Panc1 (cell line): ENCODE measurements at regions of chr15 and their contacts with region 1.

Region 1: GRCh38 chr15:55434989-55435825 is 26.9 kb downstream of the PIERCE2 start:
- DNase-seq: peak; percentile 42
- ATAC-seq: peak; percentile 97
- H3K4me3 ChIP-seq: no peak overlapping the region
- H3K27ac ChIP-seq: no peak overlapping the region
- H3K4me1 ChIP-seq: no peaks in the 10 kb centered on the region
- H3K27me3 ChIP-seq: no peaks in the 10 kb centered on the region
- CTCF ChIP-seq: peak; percentile 77

Region 2: DNA sequence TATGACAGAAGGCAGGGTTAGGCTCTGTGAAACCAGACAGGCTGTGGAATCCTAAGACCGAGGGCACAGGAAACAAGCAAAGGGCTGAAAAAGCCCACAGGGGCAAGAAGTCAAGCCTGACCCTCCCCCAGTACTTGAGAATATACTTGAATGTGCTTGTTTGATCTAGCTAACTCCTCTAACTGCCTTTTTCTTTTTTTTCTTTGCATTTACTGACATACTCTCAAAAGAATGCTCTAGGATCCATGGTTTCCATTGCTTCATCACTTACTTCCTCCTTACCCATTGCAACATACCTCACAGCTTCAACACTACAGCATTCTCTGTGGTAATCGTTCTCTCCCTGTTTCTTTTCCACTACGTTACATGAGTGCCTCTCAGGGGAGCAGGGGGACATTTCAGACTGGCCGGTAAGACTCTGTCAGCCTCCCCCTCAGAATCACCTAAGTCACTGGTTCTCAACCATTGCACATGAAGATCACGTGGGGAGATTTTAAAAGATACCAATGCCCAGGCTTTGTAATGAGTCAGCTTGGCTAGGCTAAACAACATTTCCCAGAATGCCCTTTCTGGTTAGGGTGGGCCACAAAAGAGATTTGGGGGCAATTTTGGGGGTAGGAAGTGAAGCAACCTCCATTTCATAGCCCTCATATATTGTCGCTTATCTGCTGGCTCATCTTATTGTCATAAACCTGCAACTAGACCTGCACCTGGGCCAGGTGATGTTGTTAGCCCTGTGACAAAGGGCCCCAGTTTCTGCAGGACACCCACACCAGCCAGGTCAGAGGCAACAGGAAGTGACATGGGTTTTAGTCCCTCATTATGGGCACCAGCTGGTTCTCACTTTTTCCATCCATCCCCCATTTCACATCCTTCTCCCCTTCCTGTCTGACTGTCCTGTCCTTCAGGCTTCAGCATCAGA is 213.9 kb before region 1 on chr15:
- CTCF ChIA-PET with region 1: interaction called, 4 read pairs
- POLR2A ChIA-PET with region 1: no interaction called
- in situ Hi-C with region 1: no loop called
- intact Hi-C with region 1: loop called (anchors 2 kb)
- DNase-seq: no peak
- ATAC-seq: no peak
- H3K4me3 ChIP-seq: no peak overlapping the region
- H3K27ac ChIP-seq: no peak overlapping the region
- H3K4me1 ChIP-seq: no peaks in the 10 kb centered on the region
- H3K27me3 ChIP-seq: no peaks in the 10 kb centered on the region
- CTCF ChIP-seq: no peak

Region 3: GRCh38 chr15:55318588-55319494 is 116.4 kb before region 1 on chr15 and contains the starts of genes PIGB and PIGBOS1:
- CTCF ChIA-PET with region 1: interaction called, 3 read pairs
- POLR2A ChIA-PET with region 1: interaction called, 10 read pairs
- in situ Hi-C with region 1: no loop called
- intact Hi-C with region 1: loop called (anchors 5 kb)
- DNase-seq: peak; percentile 77
- ATAC-seq: peak; percentile 98
- H3K4me3 ChIP-seq: peak within 1 kb of the TSS; percentile 86 to 87
- H3K27ac ChIP-seq: peak within 1 kb of the TSS; percentile 99
- H3K4me1 ChIP-seq: peaks cover 14% of the 10 kb centered on the region; the same call in 1 of the 2 replicates
- H3K27me3 ChIP-seq: no peaks in the 10 kb centered on the region
- CTCF ChIP-seq: no peak
- total RNA-seq, gene PIGB: 19.3 TPM
- total RNA-seq, gene PIGBOS1: 13.4 TPM

Region 4: GRCh38 chr15:55407949-55408791 is 27.0 kb before region 1 on chr15 and contains the starts of genes CCPG1 and PIERCE2:
- CTCF ChIA-PET with region 1: interaction called, 10 read pairs
- POLR2A ChIA-PET with region 1: no interaction called
- in situ Hi-C with region 1: no loop called
- intact Hi-C with region 1: no loop called
- DNase-seq: peak; percentile 80
- ATAC-seq: peak; percentile 97
- H3K4me3 ChIP-seq: peak within 1 kb of the TSS; percentile 84 to 86
- H3K27ac ChIP-seq: peak within 1 kb of the TSS; percentile 78
- H3K4me1 ChIP-seq: peaks cover 10% of the 10 kb centered on the region; the same call in 1 of the 2 replicates
- H3K27me3 ChIP-seq: no peaks in the 10 kb centered on the region
- CTCF ChIP-seq: peak; percentile 73
- total RNA-seq, gene CCPG1: 27.6 TPM
- total RNA-seq, gene PIERCE2: 2.8 TPM

Region 5: GRCh38 chr15:55564347-55565145 is 129.3 kb after region 1 on chr15:
- CTCF ChIA-PET with region 1: interaction called, 22 read pairs
- POLR2A ChIA-PET with region 1: no interaction called
- in situ Hi-C with region 1: no loop called
- intact Hi-C with region 1: no loop called
- DNase-seq: no peak
- ATAC-seq: peak; percentile 72; the same call in 1 of the 2 replicates
- H3K4me3 ChIP-seq: no peak overlapping the region
- H3K27ac ChIP-seq: no peak overlapping the region
- H3K4me1 ChIP-seq: no peaks in the 10 kb centered on the region
- H3K27me3 ChIP-seq: no peaks in the 10 kb centered on the region
- CTCF ChIP-seq: peak; percentile 31